PC-9 (cell line): ENCODE measurements at regions of chr17 and their contacts with region 1.

Region 1: DNA sequence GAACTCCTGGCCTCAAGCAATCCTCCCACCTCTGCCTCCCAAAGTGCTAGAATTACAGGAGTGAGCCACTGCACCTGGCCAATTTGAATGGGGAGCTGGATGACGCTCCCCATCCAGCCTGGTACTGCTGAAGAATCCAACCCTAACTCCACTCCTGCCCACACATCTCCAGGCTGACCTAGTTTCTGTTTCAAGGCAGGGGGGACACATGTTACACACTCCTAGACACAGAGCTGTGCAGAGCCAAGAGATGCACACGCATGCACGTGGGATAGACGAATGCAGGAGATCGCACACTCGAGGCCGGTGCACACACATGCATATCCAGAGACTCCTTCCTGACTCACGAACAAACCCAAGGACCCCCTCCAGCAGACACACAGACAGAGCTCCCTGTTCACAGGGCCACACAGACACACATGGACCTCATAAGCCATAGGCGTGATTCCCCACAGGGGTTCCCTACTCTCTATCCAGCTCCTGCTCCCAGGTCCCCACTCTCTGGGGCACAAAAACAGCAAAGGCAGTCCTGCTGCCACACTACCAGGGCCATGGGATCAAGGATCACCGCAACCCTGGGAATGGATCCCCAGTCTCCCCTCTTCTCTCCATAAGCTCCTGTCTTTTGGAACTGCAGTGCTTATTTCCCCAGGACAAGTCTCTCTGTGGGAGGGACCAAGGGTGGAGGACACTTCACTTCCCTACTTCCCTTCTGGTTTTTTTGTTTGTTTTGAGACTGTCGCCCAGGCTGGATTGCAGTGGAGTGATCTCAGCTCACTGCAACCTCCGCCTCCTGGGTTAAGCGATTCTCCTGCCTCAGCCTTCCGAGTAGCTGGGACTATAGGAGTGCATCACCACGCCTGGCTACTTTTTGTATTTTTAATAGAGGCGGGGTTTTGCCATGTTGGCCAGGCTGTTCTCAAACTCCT is 14.4 kb downstream of the EPOP start:
- DNase-seq: peak in 1 of 2 experiments; percentile 20
- H3K4me3 ChIP-seq: no peak overlapping the region
- H3K27ac ChIP-seq: no peak overlapping the region
- H3K4me1 ChIP-seq: no peaks in the 10 kb centered on the region
- H3K27me3 ChIP-seq: no peaks in the 10 kb centered on the region
- CTCF ChIP-seq: no peak

Region 2: GRCh38 chr17:38572669-38573365 is 87.5 kb before region 1 on chr17:
- CTCF ChIA-PET with region 1: interaction called, 11 read pairs
- POLR2A ChIA-PET with region 1: no interaction called
- intact Hi-C with region 1: no loop called
- DNase-seq: peak in 1 of 2 experiments; percentile 47
- H3K4me3 ChIP-seq: peak overlapping the region; percentile 54; the same call in 1 of the 2 replicates
- H3K27ac ChIP-seq: no peak overlapping the region
- H3K4me1 ChIP-seq: peaks cover 11% of the 10 kb centered on the region
- H3K27me3 ChIP-seq: no peaks in the 10 kb centered on the region
- CTCF ChIP-seq: no peak

Region 3: GRCh38 chr17:38601539-38602351 is 58.6 kb before region 1 on chr17:
- CTCF ChIA-PET with region 1: no interaction called
- POLR2A ChIA-PET with region 1: no interaction called
- intact Hi-C with region 1: no loop called
- DNase-seq: no peak
- H3K4me3 ChIP-seq: no peak overlapping the region
- H3K27ac ChIP-seq: no peak overlapping the region
- H3K4me1 ChIP-seq: peaks cover 2% of the 10 kb centered on the region
- H3K27me3 ChIP-seq: no peaks in the 10 kb centered on the region
- CTCF ChIP-seq: no peak

Region 4: GRCh38 chr17:38636054-38636453 is 24.3 kb before region 1 on chr17:
- CTCF ChIA-PET with region 1: interaction called, 10 read pairs
- POLR2A ChIA-PET with region 1: no interaction called
- intact Hi-C with region 1: no loop called
- DNase-seq: no peak
- H3K4me3 ChIP-seq: no peak overlapping the region
- H3K27ac ChIP-seq: no peak overlapping the region
- H3K4me1 ChIP-seq: no peaks in the 10 kb centered on the region
- H3K27me3 ChIP-seq: no peaks in the 10 kb centered on the region
- CTCF ChIP-seq: no peak